ENCODE measurements at regions of chr12 and their contacts with region 1.

Region 1: GRCh38 chr12:63836936-63837335 is 7.6 kb upstream of the SRGAP1 start:
- DNase-seq: no peak
- H3K4me3 ChIP-seq: no peak overlapping the region
- CTCF ChIP-seq: no peak

Region 2: DNA sequence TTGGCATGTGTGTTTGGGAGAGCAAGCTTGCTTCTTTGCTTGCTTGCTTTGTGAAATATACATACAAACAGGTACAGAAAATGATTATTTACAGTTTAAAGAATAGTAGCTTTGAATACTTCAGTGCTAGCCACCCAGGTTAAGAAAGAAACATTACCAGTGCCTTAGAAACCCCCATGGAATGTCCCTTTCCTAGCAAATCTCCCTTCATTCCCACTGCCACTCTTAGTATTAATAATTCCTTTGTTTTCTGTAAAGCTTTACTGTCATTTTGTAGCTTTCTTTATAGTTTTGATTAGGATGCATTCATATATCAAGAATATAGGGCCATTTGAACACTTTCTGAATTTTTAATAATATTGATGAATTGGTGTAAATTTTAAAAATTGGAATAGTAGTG is 17.0 kb after region 1 on chr12:
- CTCF ChIA-PET with region 1: no interaction called
- POLR2A ChIA-PET with region 1: no interaction called
- DNase-seq: no peak
- H3K4me3 ChIP-seq: no peak overlapping the region
- CTCF ChIP-seq: no peak

Region 3: DNA sequence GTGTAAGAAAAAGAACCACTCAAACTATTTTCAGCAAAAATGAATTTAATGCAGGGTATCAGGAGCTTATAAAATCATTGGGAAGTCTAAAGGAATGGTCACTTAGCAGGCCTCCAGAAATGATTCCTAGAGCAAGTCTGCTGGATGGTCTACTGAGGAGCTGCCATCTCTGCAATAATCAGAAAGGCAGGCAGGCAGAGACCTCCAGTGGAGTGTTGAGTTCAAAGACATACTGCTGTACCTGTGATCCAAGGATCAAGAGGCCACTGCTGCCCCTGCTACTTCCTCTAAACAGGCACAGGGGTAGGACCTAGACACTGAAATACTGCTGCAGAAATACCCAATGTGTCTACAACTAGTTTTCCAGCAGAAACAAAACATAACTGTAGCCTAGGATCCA is 399.6 kb after region 1 on chr12:
- CTCF ChIA-PET with region 1: interaction called, 28 read pairs
- POLR2A ChIA-PET with region 1: no interaction called
- DNase-seq: no peak
- H3K4me3 ChIP-seq: no peak overlapping the region
- CTCF ChIP-seq: peak; percentile 20

Region 4: DNA sequence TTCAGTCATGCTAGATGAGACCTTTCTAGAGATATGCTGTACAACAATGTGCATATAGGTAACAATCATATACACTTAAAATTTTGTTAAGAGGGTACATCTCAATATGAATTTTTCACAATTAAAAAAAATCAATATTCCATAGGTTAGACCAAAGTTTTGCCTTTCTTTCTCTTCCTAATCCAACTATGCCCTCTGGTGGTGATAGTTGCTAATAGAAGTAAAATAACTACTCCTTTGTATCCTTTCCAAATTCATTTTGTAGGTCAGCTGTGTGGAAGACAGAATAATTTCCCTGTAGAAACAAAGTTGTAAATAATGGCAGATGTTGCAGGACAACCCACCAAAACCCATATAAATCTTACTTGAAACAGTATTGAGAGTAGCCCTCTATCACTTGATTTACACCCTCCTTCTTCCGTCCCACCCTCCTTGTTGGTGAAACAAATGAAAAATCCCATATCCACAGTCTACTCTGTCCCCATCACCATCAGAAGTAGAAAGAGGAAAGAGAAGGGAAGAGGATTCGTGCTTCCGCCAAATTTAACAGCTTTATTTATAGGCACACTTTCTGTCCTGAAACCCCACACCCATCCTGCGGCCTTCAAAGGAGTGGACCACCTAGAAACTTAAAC is 419.3 kb after region 1 on chr12:
- CTCF ChIA-PET with region 1: interaction called, 187 read pairs
- POLR2A ChIA-PET with region 1: no interaction called
- DNase-seq: no peak
- H3K4me3 ChIP-seq: no peak overlapping the region
- CTCF ChIP-seq: peak; percentile 39

Measured in AG04449 (cell line).